Left colon (tissue), 2 donors: ENCODE measurements at regions of chr5 and their contacts with region 1.

Region 1: GRCh38 chr5:39376293-39376714 is 12.0 kb upstream of the C9 start:
- DNase-seq: no peak
- ATAC-seq: peak; percentile 41

Region 2: DNA sequence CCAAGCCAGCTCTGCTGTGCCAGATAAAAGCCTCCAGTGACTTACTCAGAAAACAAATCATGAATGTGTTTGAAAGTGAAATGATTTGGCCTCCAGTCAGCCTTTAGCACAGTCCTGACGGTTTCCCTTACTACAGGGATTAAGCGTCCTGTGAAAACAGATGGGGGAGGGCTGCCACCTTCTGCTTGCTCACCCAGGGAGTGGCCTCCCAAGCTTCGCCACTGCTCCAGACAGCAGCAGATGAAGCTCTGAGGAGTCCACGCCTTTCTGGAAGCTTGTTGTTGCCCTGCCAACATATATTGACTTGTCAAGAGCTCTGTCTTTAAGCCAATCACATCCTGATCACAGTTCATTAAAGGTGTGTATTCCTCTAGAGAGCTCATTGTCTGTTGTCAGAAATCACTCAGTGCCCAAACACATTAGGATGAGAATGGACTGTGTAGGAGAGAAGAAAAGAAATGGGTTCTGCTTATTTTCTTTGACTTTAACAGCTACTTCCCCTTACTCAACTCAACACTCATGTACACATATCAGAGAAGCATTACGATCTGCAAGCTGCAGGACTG is 152.0 kb before region 1 on chr5:
- intact Hi-C with region 1: loop called in 1 of 2 experiments (anchors 10 kb)
- DNase-seq: peak; percentile 71 to 74
- ATAC-seq: peak; percentile 93

Region 3: DNA sequence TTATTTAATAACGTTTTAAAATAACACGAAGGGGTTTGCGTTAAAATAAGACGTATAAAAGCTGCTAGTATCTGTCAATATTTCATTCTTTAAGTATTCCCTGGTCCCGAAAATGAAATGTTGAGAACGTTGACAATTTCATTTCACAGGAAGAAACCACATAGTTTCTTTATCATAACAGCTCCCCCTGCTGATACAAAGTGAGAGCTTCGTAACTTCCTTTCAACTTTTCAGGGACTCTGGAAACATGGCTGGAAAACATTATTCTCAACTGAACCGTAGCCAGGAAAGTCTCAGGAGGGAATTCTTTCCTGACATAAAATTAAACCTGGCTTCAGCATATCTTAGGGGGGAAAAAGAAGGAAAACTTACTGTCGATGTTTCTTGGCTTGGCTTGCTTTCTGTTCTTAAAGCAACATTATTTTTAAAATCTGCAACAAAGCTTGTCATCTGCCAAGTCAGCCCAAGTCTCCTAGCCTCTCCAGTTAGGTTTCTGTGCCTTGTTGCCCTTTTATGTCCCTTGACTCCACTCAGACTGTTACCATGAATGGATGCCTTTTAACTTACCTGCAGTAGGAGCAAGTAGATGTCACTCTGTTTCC is 171.3 kb after region 1 on chr5:
- intact Hi-C with region 1: loop called (anchors 5 to 10 kb)
- DNase-seq: no peak
- ATAC-seq: peak; percentile 80